ENCODE measurements at regions of chr1 and their contacts with region 1.

Region 1: GRCh38 chr1:78004719-78005447 is at the start of gene DNAJB4:
- DNase-seq: peak; percentile 93
- H3K4me3 Mint-ChIP-seq: peak within 1 kb of the TSS; percentile 89
- H3K27ac Mint-ChIP-seq: peak within 1 kb of the TSS; percentile 98
- H3K4me1 Mint-ChIP-seq: peaks cover 29% of the 10 kb centered on the region
- H3K27me3 Mint-ChIP-seq: peaks cover 2% of the 10 kb centered on the region
- total RNA-seq, gene DNAJB4: 10.3 and 11.0 TPM in 2 replicates

Region 2: GRCh38 chr1:77532641-77533040 is 472.2 kb before region 1 on chr1:
- intact Hi-C with region 1: no loop called
- DNase-seq: no peak
- H3K4me3 Mint-ChIP-seq: no peak overlapping the region
- H3K27ac Mint-ChIP-seq: no peak overlapping the region
- H3K4me1 Mint-ChIP-seq: no peaks in the 10 kb centered on the region
- H3K27me3 Mint-ChIP-seq: no peaks in the 10 kb centered on the region

Region 3: GRCh38 chr1:77759071-77760028 is 245.5 kb before region 1 on chr1 and contains the start of gene USP33:
- intact Hi-C with region 1: loop called (anchors 1 kb)
- DNase-seq: peak; percentile 98
- H3K4me3 Mint-ChIP-seq: peak within 1 kb of the TSS; percentile 95
- H3K27ac Mint-ChIP-seq: peak within 1 kb of the TSS; percentile 96
- H3K4me1 Mint-ChIP-seq: peaks cover 27% of the 10 kb centered on the region
- H3K27me3 Mint-ChIP-seq: peaks cover 2% of the 10 kb centered on the region
- total RNA-seq, gene USP33: 39.9 and 47.4 TPM in 2 replicates

Region 4: DNA sequence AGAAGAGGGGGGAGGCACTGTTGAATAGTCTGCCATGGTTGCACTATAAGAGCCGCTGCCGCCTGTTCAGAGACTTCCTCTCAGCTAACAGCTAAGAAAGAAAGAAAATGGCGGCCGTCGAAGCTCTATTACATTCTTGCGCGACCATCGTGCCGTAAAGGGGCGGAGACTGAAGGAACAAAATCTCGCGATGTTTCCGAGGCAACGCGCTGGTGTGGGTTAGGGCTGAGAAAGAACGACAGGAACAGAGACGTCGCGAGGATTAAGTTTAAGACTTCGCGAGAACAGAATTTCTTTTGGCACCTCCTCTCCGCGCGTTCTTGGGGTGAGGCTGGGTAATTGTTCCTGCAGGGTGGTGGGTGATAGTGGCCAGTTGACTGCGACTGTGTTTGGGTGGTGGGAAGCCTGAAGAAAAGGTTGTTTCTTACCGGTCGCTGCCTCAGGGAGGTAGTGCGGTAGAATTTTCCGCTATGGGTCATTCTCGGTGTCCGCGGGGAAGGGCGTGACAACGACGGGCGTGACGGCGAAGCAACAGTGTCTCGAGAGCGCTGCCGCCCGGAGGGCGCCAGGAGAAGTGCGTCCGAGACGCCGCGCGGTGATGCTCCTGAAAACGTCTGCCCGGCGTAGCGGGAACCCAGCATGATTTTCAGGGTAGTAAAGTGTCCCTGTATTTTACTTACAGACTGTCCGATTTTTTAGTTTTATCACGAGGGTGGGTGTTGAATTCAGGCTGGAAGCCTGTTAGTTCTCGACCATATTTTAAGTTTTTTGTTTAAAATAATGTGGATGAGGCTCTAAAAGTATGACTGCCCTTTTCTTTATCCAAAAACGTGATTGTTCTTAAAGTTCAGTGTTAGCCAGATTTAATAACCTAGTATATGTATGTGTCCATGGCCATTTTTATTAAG is 25.7 kb before region 1 on chr1 and contains the start of gene FUBP1:
- intact Hi-C with region 1: loop called (anchors 1 kb)
- DNase-seq: peak; percentile 99
- H3K4me3 Mint-ChIP-seq: no peak within 1 kb of the TSS
- H3K27ac Mint-ChIP-seq: no peak within 1 kb of the TSS
- H3K4me1 Mint-ChIP-seq: peaks cover 36% of the 10 kb centered on the region
- H3K27me3 Mint-ChIP-seq: no peaks in the 10 kb centered on the region
- total RNA-seq, gene FUBP1: 278 and 284 TPM in 2 replicates

Region 5: GRCh38 chr1:78114034-78114956 is 109.4 kb after region 1 on chr1:
- intact Hi-C with region 1: loop called (anchors 2 kb)
- DNase-seq: peak; percentile 89
- H3K4me3 Mint-ChIP-seq: no peak overlapping the region
- H3K27ac Mint-ChIP-seq: no peak overlapping the region
- H3K4me1 Mint-ChIP-seq: peaks cover 3% of the 10 kb centered on the region
- H3K27me3 Mint-ChIP-seq: peaks cover 3% of the 10 kb centered on the region

Region 6: DNA sequence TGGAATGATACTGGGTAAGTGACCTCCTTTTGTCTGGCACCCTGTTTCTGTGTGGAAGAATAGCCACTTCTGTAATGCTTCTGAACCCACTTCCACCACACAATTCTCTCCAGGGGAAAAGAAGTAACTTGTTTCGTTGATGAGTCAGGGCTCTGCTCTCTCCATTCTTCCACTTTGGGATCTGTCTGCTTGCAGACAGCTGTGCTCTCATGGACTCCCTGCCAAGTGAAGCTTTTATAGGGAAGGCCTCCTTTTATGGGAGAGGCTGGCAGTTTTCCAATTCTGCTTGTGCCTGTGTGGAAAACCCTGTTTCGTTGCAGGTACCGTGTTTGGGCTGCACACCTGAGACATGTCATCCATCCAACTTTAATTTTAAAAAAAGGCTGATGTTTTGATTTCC is 171.6 kb after region 1 on chr1:
- intact Hi-C with region 1: no loop called
- DNase-seq: no peak
- H3K4me3 Mint-ChIP-seq: no peak overlapping the region
- H3K27ac Mint-ChIP-seq: no peak overlapping the region
- H3K4me1 Mint-ChIP-seq: no peaks in the 10 kb centered on the region
- H3K27me3 Mint-ChIP-seq: peaks cover 1% of the 10 kb centered on the region

Measured in activated CD4-positive, alpha-beta T cell treated with anti-CD3 and anti-CD28 coated beads, Interleukin-2, amount 10 ng/mL, durations not matched to agents 24 days and 14 days (primary cell).